GM12878 (cell line): ENCODE measurements at regions of chrX and their contacts with region 1.

Region 1: GRCh38 chrX:95885074-95885473 is 799.6 kb upstream of the DIAPH2 start:
- DNase-seq: no peak
- ATAC-seq: no peak
- H3K4me3 ChIP-seq: no peak overlapping the region
- H3K27ac ChIP-seq: no peak overlapping the region
- H3K4me1 ChIP-seq: no peaks in the 10 kb centered on the region
- H3K27me3 ChIP-seq: no peaks in the 10 kb centered on the region
- CTCF ChIP-seq: no peak
- EP300 ChIP-seq: no peak
- POLR2A ChIP-seq: no peak
- RAD21 ChIP-seq: no peak

Region 2: DNA sequence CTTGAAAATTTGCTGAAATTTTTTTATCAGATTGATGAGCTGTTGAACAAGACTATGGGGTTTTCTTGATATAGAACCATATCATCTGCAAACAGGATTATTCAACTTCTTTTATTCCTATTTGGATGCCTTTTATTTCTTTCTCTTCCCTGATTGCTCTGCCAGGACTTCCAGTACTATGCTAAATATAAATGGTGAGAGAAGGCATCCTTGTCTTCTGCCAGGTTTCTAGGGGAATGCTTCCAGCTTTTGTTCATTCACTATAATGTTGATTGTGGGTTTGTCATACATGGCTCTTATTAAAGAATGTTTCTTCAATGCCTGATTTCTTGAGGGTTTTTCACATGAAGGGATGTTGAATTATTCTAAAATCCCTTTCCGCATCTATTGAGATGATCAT is 1071.5 kb before region 1 on chrX:
- CTCF ChIA-PET with region 1: no interaction called
- POLR2A ChIA-PET with region 1: no interaction called
- RAD21 ChIA-PET with region 1: no interaction called
- SMC1A ChIA-PET with region 1: no interaction called
- in situ Hi-C with region 1: no loop called
- intact Hi-C with region 1: no loop called
- DNase-seq: no peak
- ATAC-seq: no peak
- H3K4me3 ChIP-seq: no peak overlapping the region
- H3K27ac ChIP-seq: no peak overlapping the region
- H3K4me1 ChIP-seq: no peaks in the 10 kb centered on the region
- H3K27me3 ChIP-seq: no peaks in the 10 kb centered on the region
- CTCF ChIP-seq: no peak
- EP300 ChIP-seq: no peak
- POLR2A ChIP-seq: no peak
- RAD21 ChIP-seq: no peak

Region 3: DNA sequence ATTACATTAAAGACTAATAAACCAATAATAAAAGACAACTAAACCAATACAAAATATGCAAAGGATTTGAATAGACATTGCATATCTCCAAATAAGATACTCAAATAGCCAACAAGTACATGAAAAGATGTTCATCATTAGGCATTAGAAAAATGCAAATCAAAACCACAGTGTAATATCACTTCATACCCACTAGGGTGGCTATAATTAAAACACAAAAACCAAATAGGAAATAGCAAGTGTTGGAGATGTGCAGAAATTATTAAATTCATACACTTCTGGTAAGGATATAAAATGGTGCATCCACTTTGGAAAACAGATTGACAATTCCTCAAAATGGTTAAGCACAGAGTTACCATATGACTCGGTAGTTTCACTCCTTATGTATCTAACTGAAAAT is 61.3 kb before region 1 on chrX:
- CTCF ChIA-PET with region 1: no interaction called
- POLR2A ChIA-PET with region 1: no interaction called
- RAD21 ChIA-PET with region 1: no interaction called
- SMC1A ChIA-PET with region 1: no interaction called
- in situ Hi-C with region 1: loop called (anchors 10 kb)
- intact Hi-C with region 1: no loop called
- DNase-seq: no peak
- ATAC-seq: no peak
- H3K4me3 ChIP-seq: no peak overlapping the region
- H3K27ac ChIP-seq: no peak overlapping the region
- H3K4me1 ChIP-seq: no peaks in the 10 kb centered on the region
- H3K27me3 ChIP-seq: no peaks in the 10 kb centered on the region
- CTCF ChIP-seq: 0 out of 6 replicates have a peak, but pooled peaks of 1 of the 3 experiments have one; percentile 7
- EP300 ChIP-seq: no peak
- POLR2A ChIP-seq: no peak
- RAD21 ChIP-seq: no peak